Gastrocnemius medialis (tissue), 4 donors: ENCODE measurements at regions of chr13 and their contacts with region 1.

Region 1: GRCh38 chr13:74287724-74288169 is 153.5 kb upstream of the KLF12 start:
- DNase-seq: peak; percentile 26 to 43
- ATAC-seq: no peak
- H3K4me3 ChIP-seq: peak overlapping the region; percentile 8 to 28 (median 18)
- H3K27ac ChIP-seq: no peak overlapping the region
- H3K4me1 ChIP-seq: peaks cover 34 to 43% of the 10 kb centered on the region in 2 donors
- H3K27me3 ChIP-seq: no peaks in the 10 kb centered on the region
- CTCF ChIP-seq: no peak
- POLR2A ChIP-seq: no peak

Region 2: GRCh38 chr13:73945871-73946270 is 341.9 kb before region 1 on chr13:
- in situ Hi-C with region 1: no loop called
- intact Hi-C with region 1: loop called (anchors 5 kb)
- DNase-seq: peak; percentile 18 to 62
- ATAC-seq: peak; percentile 62 to 84
- H3K4me3 ChIP-seq: peak overlapping the region in 1 of 4 donors; percentile 15
- H3K27ac ChIP-seq: peak overlapping the region in 3 of 4 donors; percentile 38 to 47 (median 46)
- H3K4me1 ChIP-seq: peaks cover 12 to 17% of the 10 kb centered on the region in 2 donors
- H3K27me3 ChIP-seq: no peaks in the 10 kb centered on the region
- CTCF ChIP-seq: no peak
- POLR2A ChIP-seq: no peak